Sigmoid colon (tissue), 7 donors: ENCODE measurements at regions of chr12 and their contacts with region 1.

Region 1: DNA sequence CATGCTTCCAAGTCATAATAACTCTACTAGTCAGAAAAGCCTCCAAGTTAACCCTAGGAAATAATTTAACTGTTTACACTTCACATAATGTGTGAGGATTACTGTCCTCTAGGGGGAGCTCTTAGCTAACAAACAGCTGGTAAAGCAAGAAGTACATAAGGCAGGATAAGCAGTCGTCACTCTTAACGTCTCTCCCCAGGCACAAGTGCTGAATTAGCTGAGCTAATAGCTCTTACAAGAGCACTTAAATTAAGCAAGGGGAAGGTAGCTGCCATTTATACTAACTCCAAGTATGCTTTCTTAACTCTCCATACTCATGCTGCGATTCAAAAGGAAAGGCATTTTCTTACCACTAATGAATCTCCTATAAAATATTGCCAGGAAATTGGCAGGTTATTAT is 79.3 kb upstream of the TSPAN11 start:
- DNase-seq: no peak
- H3K4me3 ChIP-seq: no peak overlapping the region
- H3K27ac ChIP-seq: no peak overlapping the region
- H3K4me1 ChIP-seq: no peaks in the 10 kb centered on the region
- H3K27me3 ChIP-seq: no peaks in the 10 kb centered on the region
- CTCF ChIP-seq: peak in 3 of 4 experiments; percentile 51 to 60 (median 51)
- EP300 ChIP-seq: no peak
- POLR2A ChIP-seq: no peak

Region 2: GRCh38 chr12:30985814-30986452 is 138.7 kb after region 1 on chr12:
- intact Hi-C with region 1: loop called (anchors 2 kb)
- DNase-seq: no peak
- H3K4me3 ChIP-seq: no peak overlapping the region
- H3K27ac ChIP-seq: no peak overlapping the region
- H3K4me1 ChIP-seq: no peaks in the 10 kb centered on the region
- H3K27me3 ChIP-seq: no peaks in the 10 kb centered on the region
- CTCF ChIP-seq: peak in 2 of 4 experiments; percentile 45 to 52
- EP300 ChIP-seq: no peak
- POLR2A ChIP-seq: no peak

Region 3: GRCh38 chr12:31238764-31239387 is 391.6 kb after region 1 on chr12:
- intact Hi-C with region 1: loop called (anchors 5 kb)
- DNase-seq: no peak
- H3K4me3 ChIP-seq: no peak overlapping the region
- H3K27ac ChIP-seq: no peak overlapping the region
- H3K4me1 ChIP-seq: peaks cover 0 to 6% (median 0%) of the 10 kb centered on the region in 4 donors
- H3K27me3 ChIP-seq: peaks cover 0 to 17% (median 0%) of the 10 kb centered on the region in 3 donors
- CTCF ChIP-seq: peak in 3 of 4 experiments; percentile 51 to 74 (median 56)
- EP300 ChIP-seq: no peak
- POLR2A ChIP-seq: no peak